ENCODE measurements at regions of chr19 and their contacts with region 1.

Region 1: GRCh38 chr19:19900729-19901444 is at the start of gene ZNF93:
- DNase-seq: peak; percentile 90 to 96 (median 92)
- H3K4me3 ChIP-seq: peak within 1 kb of the TSS; percentile 79 to 82
- H3K4me3 Mint-ChIP-seq: peak within 1 kb of the TSS; percentile 96 to 99 (median 98)
- H3K27ac ChIP-seq: peak within 1 kb of the TSS; percentile 66
- H3K27ac Mint-ChIP-seq: peak within 1 kb of the TSS; percentile 80 to 97 (median 93)
- H3K4me1 ChIP-seq: peaks cover 15% of the 10 kb centered on the region
- H3K4me1 Mint-ChIP-seq: peaks cover 12 to 34% (median 24%) of the 10 kb centered on the region in 4 donors
- H3K27me3 ChIP-seq: no peaks in the 10 kb centered on the region
- H3K27me3 Mint-ChIP-seq: no peaks in the 10 kb centered on the region
- total RNA-seq, gene ZNF93: 8.8 to 9.2 TPM

Region 2: GRCh38 chr19:19732579-19733501 is 168.0 kb before region 1 on chr19 and contains the start of gene ZNF14:
- CTCF ChIA-PET with region 1: no interaction called
- POLR2A ChIA-PET with region 1: interaction called, 13 read pairs
- intact Hi-C with region 1: no loop called
- DNase-seq: peak; percentile 87 to 94 (median 88)
- H3K4me3 ChIP-seq: peak within 1 kb of the TSS; percentile 59 to 81
- H3K4me3 Mint-ChIP-seq: peak within 1 kb of the TSS; percentile 95 to 100 (median 98)
- H3K27ac ChIP-seq: peak within 1 kb of the TSS; percentile 72
- H3K27ac Mint-ChIP-seq: peak within 1 kb of the TSS; percentile 93 to 99 (median 98)
- H3K4me1 ChIP-seq: peaks cover 18% of the 10 kb centered on the region
- H3K4me1 Mint-ChIP-seq: peaks cover 11 to 40% (median 24%) of the 10 kb centered on the region in 4 donors
- H3K27me3 ChIP-seq: no peaks in the 10 kb centered on the region
- H3K27me3 Mint-ChIP-seq: no peaks in the 10 kb centered on the region
- total RNA-seq, gene ZNF14: 31.2 to 32.2 TPM

Region 3: DNA sequence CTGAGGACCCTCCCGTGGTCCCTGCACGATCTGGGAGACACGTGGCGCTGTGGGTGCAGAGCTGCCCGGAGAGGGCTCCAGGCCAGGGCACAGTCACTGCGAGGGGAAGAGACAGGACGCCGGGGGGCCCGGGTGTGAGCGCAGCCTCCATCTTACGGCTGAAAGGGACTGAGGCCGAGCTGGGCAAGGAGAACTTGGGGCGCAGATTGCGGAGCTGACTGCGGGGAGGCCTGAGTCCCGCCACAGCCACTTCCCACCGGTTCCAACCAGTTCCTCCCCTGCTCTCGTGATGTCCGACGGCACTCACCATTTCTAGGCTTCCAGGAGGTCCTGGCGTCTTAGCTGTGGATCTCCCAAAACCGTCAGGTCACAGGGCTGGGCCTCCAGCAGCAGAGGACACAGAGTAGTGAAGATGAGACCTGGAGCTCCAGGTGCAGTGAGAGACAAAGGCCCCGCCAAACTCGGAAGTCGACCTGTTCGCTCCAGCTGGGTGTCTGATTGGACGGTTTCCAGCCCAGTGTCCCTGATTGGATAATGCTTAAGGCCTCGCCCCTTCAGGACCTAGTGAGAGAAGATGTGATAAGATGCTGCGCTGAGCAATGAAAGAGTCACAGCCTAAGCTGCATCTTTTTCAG is 40.0 kb before region 1 on chr19:
- CTCF ChIA-PET with region 1: interaction called, 3 read pairs
- POLR2A ChIA-PET with region 1: interaction called, 71 read pairs
- intact Hi-C with region 1: loop called (anchors 1 kb)
- DNase-seq: peak; percentile 50 to 77 (median 61)
- H3K4me3 ChIP-seq: no peak overlapping the region
- H3K4me3 Mint-ChIP-seq: peak overlapping the region; percentile 31 to 85 (median 54)
- H3K27ac ChIP-seq: no peak overlapping the region
- H3K27ac Mint-ChIP-seq: peak overlapping the region in 2 of 7 donors; percentile 53 to 86
- H3K4me1 ChIP-seq: no peaks in the 10 kb centered on the region
- H3K4me1 Mint-ChIP-seq: peaks cover 2 to 14% (median 8%) of the 10 kb centered on the region in 4 donors
- H3K27me3 ChIP-seq: no peaks in the 10 kb centered on the region
- H3K27me3 Mint-ChIP-seq: peaks cover 0 to 1% of the 10 kb centered on the region in 2 donors

Region 4: DNA sequence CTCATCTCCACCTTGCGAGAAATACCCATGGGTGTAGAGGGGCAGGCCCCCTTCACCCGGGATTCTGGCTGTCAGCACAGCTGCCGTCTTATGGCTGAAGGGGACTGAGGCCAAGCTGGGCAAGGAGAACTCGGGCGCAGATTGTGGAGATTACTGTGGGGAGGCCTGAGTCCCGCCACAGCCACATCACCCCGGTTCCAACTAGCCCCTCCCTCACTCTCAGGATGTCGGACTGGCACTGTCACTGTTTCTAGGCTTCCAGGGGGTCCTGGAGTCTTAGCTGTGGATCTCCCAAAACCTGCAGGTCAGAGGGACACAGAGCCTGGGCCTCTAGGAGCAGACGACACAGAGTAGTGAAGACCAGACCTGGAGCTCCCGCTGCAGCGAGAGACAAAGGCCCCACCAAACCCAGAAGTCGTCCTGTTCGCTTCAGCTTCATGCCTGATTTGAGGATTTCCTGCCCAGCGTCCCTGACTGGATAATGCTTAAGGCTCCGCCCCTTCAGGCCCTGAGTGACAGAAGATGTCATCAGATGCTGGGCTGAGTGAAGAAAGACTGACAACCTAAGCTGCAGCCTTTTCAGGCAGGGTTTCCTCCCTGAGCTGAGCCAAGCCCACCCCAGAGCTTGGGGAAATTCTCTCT is 55.7 kb after region 1 on chr19:
- CTCF ChIA-PET with region 1: no interaction called
- POLR2A ChIA-PET with region 1: no interaction called
- intact Hi-C with region 1: no loop called
- DNase-seq: no peak
- H3K4me3 ChIP-seq: no peak overlapping the region
- H3K4me3 Mint-ChIP-seq: no peak overlapping the region
- H3K27ac ChIP-seq: no peak overlapping the region
- H3K27ac Mint-ChIP-seq: no peak overlapping the region
- H3K4me1 ChIP-seq: no peaks in the 10 kb centered on the region
- H3K4me1 Mint-ChIP-seq: peaks cover 0 to 7% (median 3%) of the 10 kb centered on the region in 4 donors
- H3K27me3 ChIP-seq: no peaks in the 10 kb centered on the region
- H3K27me3 Mint-ChIP-seq: no peaks in the 10 kb centered on the region

Measured in CD4-positive, alpha-beta memory T cell (primary cell).